CD8-positive, alpha-beta memory T cell (primary cell): ENCODE measurements at regions of chr9 and their contacts with region 1.

Region 1: GRCh38 chr9:137423004-137423874 is at the starts of genes EXD3 and NOXA1:
- DNase-seq: peak; percentile 86 to 94 (median 92)
- H3K4me3 ChIP-seq: peak within 1 kb of the TSS; percentile 77
- H3K4me3 Mint-ChIP-seq: peak within 1 kb of the TSS; percentile 79 to 90 (median 86)
- H3K27ac ChIP-seq: peak within 1 kb of the TSS; percentile 69
- H3K27ac Mint-ChIP-seq: peak within 1 kb of the TSS in 6 of 8 donors; percentile 47 to 78 (median 72)
- H3K4me1 ChIP-seq: peaks cover 9% of the 10 kb centered on the region
- H3K4me1 Mint-ChIP-seq: peaks cover 18 to 23% (median 20%) of the 10 kb centered on the region in 3 donors
- H3K27me3 ChIP-seq: no peaks in the 10 kb centered on the region
- H3K27me3 Mint-ChIP-seq: no peaks in the 10 kb centered on the region
- total RNA-seq, gene EXD3: 4.8 to 6.6 TPM
- total RNA-seq, gene NOXA1: 0.66 to 0.74 TPM

Region 2: DNA sequence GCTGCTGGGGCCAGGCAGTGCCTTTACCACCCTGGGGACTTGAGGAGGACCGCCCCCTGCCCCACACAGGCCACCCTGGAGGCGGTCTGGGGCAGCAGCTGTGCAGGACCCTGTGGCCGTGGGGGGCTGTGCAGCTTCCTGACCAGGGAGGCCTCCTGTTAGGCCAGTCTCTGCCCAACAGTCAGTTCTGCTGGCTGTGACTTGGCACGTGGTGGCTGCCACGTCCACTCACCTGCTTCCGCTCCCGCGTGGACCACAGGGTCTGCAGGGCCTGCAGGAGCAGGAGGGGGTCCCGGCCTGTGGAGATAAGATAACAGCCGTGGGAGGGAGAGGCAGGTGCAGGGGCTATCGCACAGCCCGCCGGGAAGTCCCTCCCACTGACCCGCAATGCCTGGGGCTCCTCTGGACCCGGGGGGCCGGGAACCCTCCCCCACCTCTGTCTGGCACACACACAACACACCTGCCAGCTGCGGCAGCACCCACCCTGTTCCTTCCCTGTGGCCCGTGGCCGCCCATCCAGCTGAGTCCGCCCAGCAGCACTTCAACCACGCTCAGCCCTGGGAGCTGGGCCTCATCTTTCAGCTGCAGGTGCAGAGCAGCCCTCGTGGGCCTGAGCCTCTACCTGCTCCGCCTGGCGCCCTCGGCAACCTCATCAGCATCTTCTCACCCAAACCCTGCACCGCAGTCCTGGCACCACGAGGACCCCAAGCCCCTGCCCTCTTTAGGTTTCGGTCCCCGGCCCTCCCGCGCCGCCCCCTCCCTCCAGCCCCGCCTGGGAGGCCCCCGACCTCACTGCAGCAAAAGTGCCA is 40.0 kb before region 1 on chr9:
- CTCF ChIA-PET with region 1: no interaction called
- POLR2A ChIA-PET with region 1: no interaction called
- DNase-seq: peak in 1 of 5 donors; percentile 34
- H3K4me3 ChIP-seq: no peak overlapping the region
- H3K4me3 Mint-ChIP-seq: no peak overlapping the region
- H3K27ac ChIP-seq: no peak overlapping the region
- H3K27ac Mint-ChIP-seq: no peak overlapping the region
- H3K4me1 ChIP-seq: peaks cover 12% of the 10 kb centered on the region
- H3K4me1 Mint-ChIP-seq: peaks cover 0 to 14% (median 0%) of the 10 kb centered on the region in 3 donors
- H3K27me3 ChIP-seq: no peaks in the 10 kb centered on the region
- H3K27me3 Mint-ChIP-seq: no peaks in the 10 kb centered on the region

Region 3: DNA sequence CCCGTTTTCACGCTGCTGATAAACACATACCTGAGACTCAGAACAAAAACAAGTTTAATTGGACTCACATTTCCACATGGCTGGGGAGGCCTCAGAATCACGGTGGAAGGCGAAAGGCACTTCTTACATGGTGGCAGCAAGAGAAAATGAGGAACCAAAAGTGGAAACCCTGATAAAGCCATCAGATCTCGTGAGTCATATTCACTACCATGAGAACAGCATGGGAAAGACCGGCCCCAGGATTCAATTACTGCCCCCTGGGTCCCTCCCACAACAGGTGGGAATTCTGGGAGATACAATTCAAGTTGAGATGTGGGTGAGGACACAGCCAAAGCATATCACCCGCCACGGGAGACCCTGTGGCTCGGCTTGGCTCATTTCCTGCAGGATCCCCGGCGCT is 20.5 kb before region 1 on chr9:
- CTCF ChIA-PET with region 1: no interaction called
- POLR2A ChIA-PET with region 1: no interaction called
- DNase-seq: no peak
- H3K4me3 ChIP-seq: no peak overlapping the region
- H3K4me3 Mint-ChIP-seq: no peak overlapping the region
- H3K27ac ChIP-seq: no peak overlapping the region
- H3K27ac Mint-ChIP-seq: no peak overlapping the region
- H3K4me1 ChIP-seq: peaks cover 6% of the 10 kb centered on the region
- H3K4me1 Mint-ChIP-seq: peaks cover 4 to 9% (median 8%) of the 10 kb centered on the region in 3 donors
- H3K27me3 ChIP-seq: no peaks in the 10 kb centered on the region
- H3K27me3 Mint-ChIP-seq: peaks cover 0 to 2% of the 10 kb centered on the region in 2 donors

Region 4: DNA sequence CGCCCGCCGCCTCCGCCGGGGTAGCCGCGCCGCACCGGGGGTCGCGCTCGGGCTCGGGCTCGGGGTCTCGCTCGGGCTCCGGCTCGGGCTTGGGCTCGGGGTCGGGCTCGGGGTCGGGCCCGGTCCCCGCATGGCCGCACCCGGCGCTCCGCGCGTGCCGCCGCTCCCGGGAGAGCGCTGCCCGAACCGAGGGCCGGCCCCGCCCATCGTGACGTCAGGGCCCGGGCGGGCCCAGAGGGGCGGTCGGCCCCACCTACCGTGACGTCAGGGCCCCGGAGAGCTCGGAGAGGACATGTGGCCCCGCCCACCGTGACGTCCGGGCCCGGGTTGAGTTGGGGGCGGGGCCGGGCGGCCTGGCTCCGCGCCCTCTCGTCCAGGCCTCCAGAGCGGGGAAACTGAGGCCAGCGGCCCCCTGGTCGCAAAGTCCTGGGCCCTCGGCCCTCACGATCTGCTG is 35.9 kb after region 1 on chr9 and contains the start of gene NSMF:
- CTCF ChIA-PET with region 1: interaction called, 6 read pairs
- POLR2A ChIA-PET with region 1: interaction called, 10 read pairs
- DNase-seq: peak; percentile 91 to 94 (median 93)
- H3K4me3 ChIP-seq: peak within 1 kb of the TSS; percentile 53
- H3K4me3 Mint-ChIP-seq: peak within 1 kb of the TSS; percentile 52 to 88 (median 66)
- H3K27ac ChIP-seq: peak within 1 kb of the TSS; percentile 60
- H3K27ac Mint-ChIP-seq: peak within 1 kb of the TSS in 7 of 8 donors; percentile 56 to 94 (median 84)
- H3K4me1 ChIP-seq: peaks cover 70% of the 10 kb centered on the region
- H3K4me1 Mint-ChIP-seq: peaks cover 10 to 51% (median 20%) of the 10 kb centered on the region in 3 donors
- H3K27me3 ChIP-seq: no peaks in the 10 kb centered on the region
- H3K27me3 Mint-ChIP-seq: no peaks in the 10 kb centered on the region
- total RNA-seq, gene NSMF: 40.9 to 42.8 TPM

Region 5: GRCh38 chr9:137524161-137524983 is 101.1 kb after region 1 on chr9:
- CTCF ChIA-PET with region 1: interaction called, 14 read pairs
- POLR2A ChIA-PET with region 1: no interaction called
- DNase-seq: peak in 1 of 5 donors; percentile 37
- H3K4me3 ChIP-seq: no peak overlapping the region
- H3K4me3 Mint-ChIP-seq: no peak overlapping the region
- H3K27ac ChIP-seq: no peak overlapping the region
- H3K27ac Mint-ChIP-seq: no peak overlapping the region
- H3K4me1 ChIP-seq: no peaks in the 10 kb centered on the region
- H3K4me1 Mint-ChIP-seq: peaks cover 2 to 4% (median 3%) of the 10 kb centered on the region in 3 donors
- H3K27me3 ChIP-seq: no peaks in the 10 kb centered on the region
- H3K27me3 Mint-ChIP-seq: no peaks in the 10 kb centered on the region